ENCODE measurements at regions of chr12 and their contacts with region 1.

Region 1: DNA sequence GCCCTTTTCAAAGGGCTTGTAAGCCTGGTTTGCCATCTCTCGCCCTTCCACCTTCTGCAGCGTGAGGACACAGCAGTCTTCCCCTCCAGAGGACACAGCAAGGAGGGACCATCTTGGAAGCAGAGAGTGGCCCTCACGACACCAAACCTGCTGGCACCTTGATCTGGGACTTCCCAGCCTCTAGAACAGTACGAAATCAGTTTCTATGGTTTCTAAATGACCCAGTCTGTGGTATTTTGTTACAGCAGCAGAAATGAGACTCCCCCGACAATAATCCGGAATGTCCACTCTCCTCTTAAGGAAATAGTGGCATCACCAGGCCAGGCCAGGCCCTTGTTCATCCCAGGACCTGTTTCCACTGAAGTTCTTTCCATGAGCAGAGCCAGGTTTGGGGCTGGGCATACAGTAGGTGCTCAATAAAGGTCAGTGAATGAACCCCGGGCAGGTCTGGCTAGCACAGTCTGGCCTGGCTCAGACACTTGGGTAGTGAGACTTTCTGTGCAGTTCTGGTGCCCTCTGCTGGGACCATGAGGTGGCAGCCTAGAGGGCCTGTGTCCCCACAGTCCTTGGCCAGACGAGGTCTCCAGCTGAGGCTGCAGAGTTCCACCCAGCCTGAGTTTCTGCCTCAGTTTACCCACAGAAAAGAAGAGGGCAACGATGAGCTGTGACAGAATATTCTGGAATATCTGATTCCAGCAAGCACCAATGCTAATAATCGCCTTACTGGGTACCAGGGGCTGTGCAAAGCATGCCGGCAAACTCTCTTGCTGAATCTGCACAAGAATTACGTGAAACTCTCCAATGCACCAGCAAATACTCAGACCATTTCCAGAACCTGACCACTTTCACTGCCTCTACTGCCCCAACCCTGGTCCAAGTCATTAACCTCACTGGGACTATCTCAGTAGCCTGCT is 14.0 kb downstream of the ABCB9 start:
- DNase-seq: peak; percentile 59
- ATAC-seq: peak; percentile 95
- H3K4me3 ChIP-seq: no peak overlapping the region
- H3K27ac ChIP-seq: 0 out of 2 replicates have a peak overlapping the region, but pooled peaks have one; percentile 4
- H3K4me1 ChIP-seq: peaks cover 11 to 32% of the 10 kb centered on the region in 2 experiments
- H3K27me3 ChIP-seq: no peaks in the 10 kb centered on the region
- CTCF ChIP-seq: peak in 2 of 3 experiments; percentile 88 to 97; a peak in 4 of 6 replicates
- POLR2A ChIP-seq: no peak
- RAD21 ChIP-seq: no peak

Region 2: DNA sequence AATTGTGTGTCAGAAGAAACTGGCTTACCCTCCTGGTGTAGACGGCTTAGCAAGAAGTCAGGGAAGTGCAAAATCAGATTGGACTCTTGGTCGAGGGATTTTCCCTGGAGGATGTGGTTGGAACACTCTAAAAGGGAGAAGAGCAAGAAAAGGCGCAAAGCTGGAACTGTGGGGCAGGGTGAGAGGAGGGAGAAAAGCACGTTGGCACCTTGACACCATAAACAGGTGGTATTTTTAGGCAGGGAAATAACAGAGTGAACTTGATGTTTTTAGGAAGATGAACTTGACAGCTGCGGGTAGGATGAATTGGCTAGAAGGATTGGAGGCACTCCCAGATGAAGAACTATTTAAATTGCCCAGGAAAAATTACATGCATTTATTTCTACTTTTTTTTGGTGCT is 316.8 kb before region 1 on chr12:
- CTCF ChIA-PET with region 1: interaction called, 3 read pairs
- POLR2A ChIA-PET with region 1: no interaction called
- RAD21 ChIA-PET with region 1: no interaction called
- intact Hi-C with region 1: loop called (anchors 5 kb)
- DNase-seq: no peak
- ATAC-seq: no peak
- H3K4me3 ChIP-seq: no peak overlapping the region
- H3K27ac ChIP-seq: no peak overlapping the region
- H3K4me1 ChIP-seq: no peaks in the 10 kb centered on the region
- H3K27me3 ChIP-seq: no peaks in the 10 kb centered on the region
- CTCF ChIP-seq: no peak
- POLR2A ChIP-seq: no peak
- RAD21 ChIP-seq: no peak

Region 3: GRCh38 chr12:122793685-122794106 is 158.5 kb before region 1 on chr12:
- CTCF ChIA-PET with region 1: no interaction called
- POLR2A ChIA-PET with region 1: no interaction called
- RAD21 ChIA-PET with region 1: interaction called in 1 of 2 experiments, 3 read pairs
- intact Hi-C with region 1: loop called (anchors 1 kb)
- DNase-seq: peak; percentile 52
- ATAC-seq: peak; percentile 89
- H3K4me3 ChIP-seq: no peak overlapping the region
- H3K27ac ChIP-seq: no peak overlapping the region
- H3K4me1 ChIP-seq: 0 out of 4 replicates have a peak, but pooled peaks cover 0 to under 1% of the 10 kb centered on the region in 2 experiments
- H3K27me3 ChIP-seq: no peaks in the 10 kb centered on the region
- CTCF ChIP-seq: peak; percentile 55 to 82 (median 58); a peak in 5 of 6 replicates
- POLR2A ChIP-seq: no peak
- RAD21 ChIP-seq: peak; percentile 87

Region 4: GRCh38 chr12:122860346-122861090 is 91.7 kb before region 1 on chr12:
- CTCF ChIA-PET with region 1: interaction called, 17 read pairs
- POLR2A ChIA-PET with region 1: interaction called, 5 read pairs
- RAD21 ChIA-PET with region 1: interaction called, 3 to 6 read pairs
- intact Hi-C with region 1: loop called (anchors 1 kb)
- DNase-seq: peak; percentile 50
- ATAC-seq: peak; percentile 74
- H3K4me3 ChIP-seq: no peak overlapping the region
- H3K27ac ChIP-seq: no peak overlapping the region
- H3K4me1 ChIP-seq: no peaks in the 10 kb centered on the region
- H3K27me3 ChIP-seq: no peaks in the 10 kb centered on the region
- CTCF ChIP-seq: peak; percentile 87 to 94 (median 87)
- POLR2A ChIP-seq: no peak
- RAD21 ChIP-seq: peak; percentile 96

Region 5: GRCh38 chr12:122880668-122881067 is 71.6 kb before region 1 on chr12:
- CTCF ChIA-PET with region 1: interaction called, 4 read pairs
- POLR2A ChIA-PET with region 1: no interaction called
- RAD21 ChIA-PET with region 1: interaction called, 3 to 6 read pairs
- intact Hi-C with region 1: loop called (anchors 1 kb)
- DNase-seq: no peak
- ATAC-seq: peak; percentile 98
- H3K4me3 ChIP-seq: no peak overlapping the region
- H3K27ac ChIP-seq: no peak overlapping the region
- H3K4me1 ChIP-seq: peaks cover 5 to 53% of the 10 kb centered on the region in 2 experiments
- H3K27me3 ChIP-seq: no peaks in the 10 kb centered on the region
- CTCF ChIP-seq: peak; percentile 31 to 74 (median 71); a peak in 5 of 6 replicates
- POLR2A ChIP-seq: no peak
- RAD21 ChIP-seq: peak; percentile 82

Measured in HCT116 (cell line).